Ascending aorta (tissue), 2 donors: ENCODE measurements at regions of chr7 and their contacts with region 1.

Region 1: GRCh38 chr7:74202841-74203556 is 6.8 kb upstream of the LAT2 start:
- DNase-seq: no peak
- H3K4me3 ChIP-seq: no peak overlapping the region
- H3K27ac ChIP-seq: no peak overlapping the region
- H3K4me1 ChIP-seq: peaks cover 0 to 5% of the 10 kb centered on the region in 2 donors
- H3K27me3 ChIP-seq: no peaks in the 10 kb centered on the region
- CTCF ChIP-seq: peak; percentile 45 to 60 (median 54)

Region 2: GRCh38 chr7:74401137-74401859 is 198.3 kb after region 1 on chr7:
- intact Hi-C with region 1: loop called (anchors 2 kb)
- DNase-seq: peak in 1 of 2 donors; percentile 82
- H3K4me3 ChIP-seq: no peak overlapping the region
- H3K27ac ChIP-seq: no peak overlapping the region
- H3K4me1 ChIP-seq: no peaks in the 10 kb centered on the region
- H3K27me3 ChIP-seq: no peaks in the 10 kb centered on the region
- CTCF ChIP-seq: peak; percentile 91 to 98 (median 97)

Region 3: GRCh38 chr7:74429153-74429747 is 226.3 kb after region 1 on chr7:
- intact Hi-C with region 1: no loop called
- DNase-seq: no peak
- H3K4me3 ChIP-seq: no peak overlapping the region
- H3K27ac ChIP-seq: no peak overlapping the region
- H3K4me1 ChIP-seq: no peaks in the 10 kb centered on the region
- H3K27me3 ChIP-seq: no peaks in the 10 kb centered on the region
- CTCF ChIP-seq: no peak

Region 4: GRCh38 chr7:74466196-74466813 is 263.3 kb after region 1 on chr7:
- intact Hi-C with region 1: no loop called
- DNase-seq: no peak
- H3K4me3 ChIP-seq: no peak overlapping the region
- H3K27ac ChIP-seq: no peak overlapping the region
- H3K4me1 ChIP-seq: no peaks in the 10 kb centered on the region
- H3K27me3 ChIP-seq: no peaks in the 10 kb centered on the region
- CTCF ChIP-seq: no peak